Tibial artery (tissue), 4 donors: ENCODE measurements at regions of chr9 and their contacts with region 1.

Region 1: GRCh38 chr9:37119907-37120842 is at the start of gene ZCCHC7:
- DNase-seq: peak; percentile 97
- H3K4me3 ChIP-seq: peak within 1 kb of the TSS; percentile 70 to 91
- H3K27ac ChIP-seq: peak within 1 kb of the TSS; percentile 88 to 96
- H3K4me1 ChIP-seq: peaks cover 0 to 20% (median 6%) of the 10 kb centered on the region in 4 donors
- H3K27me3 ChIP-seq: no peaks in the 10 kb centered on the region
- CTCF ChIP-seq: no peak

Region 2: DNA sequence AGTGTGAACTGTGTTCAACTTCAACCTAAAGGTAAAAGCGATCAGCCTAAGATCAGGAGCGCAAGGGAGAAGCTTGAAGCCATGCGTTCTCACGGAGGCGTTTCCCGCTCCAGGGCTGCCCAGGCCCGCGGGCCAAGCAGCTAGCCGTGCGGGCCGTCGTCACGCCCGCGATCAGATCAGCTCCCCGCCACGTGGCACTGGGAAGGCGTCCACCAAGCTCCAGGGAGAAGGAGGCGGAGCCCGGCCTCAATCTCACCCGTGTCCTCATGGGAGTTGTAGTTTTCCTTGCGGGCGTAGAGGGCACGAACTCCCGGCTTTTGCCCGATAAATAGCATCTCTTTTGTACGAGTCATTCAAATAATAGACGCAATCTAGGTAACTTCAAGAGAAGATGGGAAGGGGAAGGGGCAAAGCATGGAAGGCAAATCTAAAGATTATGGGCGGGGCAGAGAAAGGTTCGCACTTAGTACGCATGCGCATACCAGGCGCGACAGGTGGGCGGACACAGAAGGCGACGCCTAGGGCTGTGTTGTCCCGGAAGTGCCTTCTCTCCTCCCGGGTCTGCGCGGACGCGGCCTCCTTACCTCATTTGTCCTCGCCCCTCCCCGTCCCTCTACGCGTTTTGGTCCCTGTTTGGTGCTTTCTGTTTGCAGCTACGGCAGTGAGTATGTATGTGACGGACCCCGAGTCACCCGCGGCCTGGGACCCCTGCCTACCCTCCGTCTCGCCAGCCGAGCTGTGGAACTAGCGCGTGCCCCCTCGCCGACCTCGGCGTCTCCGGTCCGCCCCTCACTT is 40.6 kb before region 1 on chr9:
- intact Hi-C with region 1: loop called (anchors 5 kb)
- DNase-seq: peak; percentile 93 to 95
- H3K4me3 ChIP-seq: peak overlapping the region; percentile 74 to 79
- H3K27ac ChIP-seq: peak overlapping the region; percentile 86 to 92
- H3K4me1 ChIP-seq: peaks cover 0 to 31% (median 10%) of the 10 kb centered on the region in 4 donors
- H3K27me3 ChIP-seq: no peaks in the 10 kb centered on the region
- CTCF ChIP-seq: no peak